ENCODE measurements at regions of chr22 and their contacts with region 1.

Region 1: DNA sequence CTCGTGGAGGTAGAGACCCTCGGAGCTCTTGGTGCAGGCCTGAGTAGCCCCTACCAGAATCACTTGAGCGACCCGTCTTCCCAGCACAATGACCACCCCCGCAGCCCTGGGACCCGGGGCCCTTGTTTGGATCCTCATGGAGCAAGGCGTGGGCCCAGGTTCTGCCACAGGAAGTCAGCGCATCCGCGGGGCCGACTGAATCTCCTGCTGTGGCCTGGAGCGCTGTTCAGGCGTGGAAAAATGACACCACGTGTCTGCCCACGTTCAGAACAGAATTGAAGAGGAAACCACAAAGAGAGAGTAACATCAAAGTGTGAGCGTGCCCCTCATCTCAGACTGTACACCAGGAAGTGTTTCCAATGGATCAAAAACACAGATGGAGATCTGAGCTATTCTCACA is 1479.2 kb downstream of the TBC1D22A start:
- DNase-seq: no peak
- H3K4me3 ChIP-seq: no peak overlapping the region
- H3K27ac ChIP-seq: no peak overlapping the region
- H3K4me1 ChIP-seq: no peaks in the 10 kb centered on the region
- H3K27me3 ChIP-seq: peaks cover 0 to 18% of the 10 kb centered on the region in 2 donors
- CTCF ChIP-seq: no peak
- POLR2A ChIP-seq: no peak

Region 2: GRCh38 chr22:47355776-47356510 is 885.7 kb before region 1 on chr22:
- intact Hi-C with region 1: loop called (anchors 5 kb)
- DNase-seq: no peak
- H3K4me3 ChIP-seq: no peak overlapping the region
- H3K27ac ChIP-seq: no peak overlapping the region
- H3K4me1 ChIP-seq: no peaks in the 10 kb centered on the region
- H3K27me3 ChIP-seq: peaks cover 0 to 9% of the 10 kb centered on the region in 2 donors
- CTCF ChIP-seq: no peak
- POLR2A ChIP-seq: no peak

Region 3: DNA sequence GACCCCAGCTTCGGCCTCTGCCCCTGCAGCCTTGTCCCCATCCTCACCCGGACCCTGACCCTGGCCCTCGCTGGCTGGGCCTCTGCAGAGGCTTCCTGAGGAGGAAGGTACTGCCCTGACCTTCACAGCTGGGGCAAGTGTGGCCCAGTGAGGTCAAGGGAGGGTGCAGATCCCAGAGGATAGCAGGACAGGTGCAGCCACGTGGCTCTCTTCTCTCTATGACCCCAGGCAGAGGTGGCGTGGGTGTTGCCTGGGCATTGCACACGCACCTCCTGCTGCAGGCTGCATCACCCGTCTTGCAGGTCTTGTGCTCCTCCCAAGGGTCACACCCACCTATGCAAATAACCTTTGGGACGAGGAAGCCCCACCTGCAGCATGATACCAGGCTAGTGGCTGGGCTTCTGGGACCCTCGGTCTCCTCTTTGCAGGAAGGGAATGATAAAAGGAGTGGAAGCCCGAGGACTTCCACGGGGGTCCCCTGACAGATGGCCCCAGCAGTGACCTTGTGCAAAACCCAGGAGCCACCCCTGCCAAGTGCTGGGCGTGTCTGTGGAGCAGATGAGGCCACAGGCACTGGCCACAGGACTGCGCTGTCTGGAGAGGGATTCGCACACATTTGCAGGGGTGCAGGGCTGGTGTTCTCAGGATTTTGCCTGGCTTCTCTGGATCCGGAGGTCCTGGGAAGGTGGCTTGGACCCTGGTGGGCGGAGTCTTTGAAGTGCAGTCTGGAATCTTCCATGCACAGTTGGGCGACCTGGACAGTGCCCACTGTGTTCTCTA is 344.6 kb after region 1 on chr22:
- intact Hi-C with region 1: no loop called
- DNase-seq: no peak
- H3K4me3 ChIP-seq: no peak overlapping the region
- H3K27ac ChIP-seq: no peak overlapping the region
- H3K4me1 ChIP-seq: no peaks in the 10 kb centered on the region
- H3K27me3 ChIP-seq: no peaks in the 10 kb centered on the region
- CTCF ChIP-seq: no peak
- POLR2A ChIP-seq: no peak